B cell (primary cell): ENCODE measurements at regions of chr14 and their contacts with region 1.

Region 1: GRCh38 chr14:67285876-67286452 is 44.7 kb downstream of the PALS1 start:
- DNase-seq: peak; percentile 56
- ATAC-seq: no peak
- H3K4me3 ChIP-seq: no peak overlapping the region
- H3K4me3 Mint-ChIP-seq: no peak overlapping the region
- H3K27ac ChIP-seq: no peak overlapping the region
- H3K27ac Mint-ChIP-seq: no peak overlapping the region
- H3K4me1 ChIP-seq: no peaks in the 10 kb centered on the region
- H3K4me1 Mint-ChIP-seq: no peaks in the 10 kb centered on the region
- H3K27me3 ChIP-seq: no peaks in the 10 kb centered on the region
- H3K27me3 Mint-ChIP-seq: no peaks in the 10 kb centered on the region
- CTCF ChIP-seq: peak; percentile 85

Region 2: DNA sequence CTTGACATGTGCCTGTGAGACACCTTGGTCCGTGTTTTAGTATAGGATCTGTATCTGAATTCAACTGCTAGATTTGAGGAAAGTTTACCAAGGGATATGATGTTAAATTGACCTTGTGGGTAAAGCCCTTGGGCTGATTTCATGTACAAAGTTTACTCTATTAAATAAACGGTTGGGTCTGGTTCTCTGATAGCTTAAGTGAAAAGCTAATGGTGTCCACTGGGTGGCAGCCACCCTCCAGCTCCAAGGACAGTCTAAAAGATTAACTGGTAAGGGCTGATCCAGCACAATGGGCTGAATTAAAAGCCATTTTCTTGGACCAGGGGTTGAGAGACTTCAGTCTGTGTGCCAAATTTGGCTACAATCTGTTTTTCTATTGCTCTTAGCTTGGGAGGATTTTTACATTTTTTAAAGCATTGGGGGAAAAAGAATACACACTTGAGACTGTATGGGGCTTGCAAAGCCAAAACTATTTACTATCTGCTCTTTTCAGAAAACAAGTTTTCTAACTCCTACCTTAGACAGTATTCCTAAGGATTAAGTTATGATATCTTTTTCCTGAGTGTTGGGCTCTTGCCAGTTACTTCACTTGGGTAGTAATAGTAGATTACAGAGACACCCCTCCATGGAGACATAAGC is 661.5 kb before region 1 on chr14:
- CTCF ChIA-PET with region 1: interaction called, 24 read pairs
- POLR2A ChIA-PET with region 1: no interaction called
- intact Hi-C with region 1: loop called (anchors 2 kb)
- DNase-seq: peak; percentile 35
- ATAC-seq: no peak
- H3K4me3 ChIP-seq: no peak overlapping the region
- H3K4me3 Mint-ChIP-seq: no peak overlapping the region
- H3K27ac ChIP-seq: no peak overlapping the region
- H3K27ac Mint-ChIP-seq: no peak overlapping the region
- H3K4me1 ChIP-seq: no peaks in the 10 kb centered on the region
- H3K4me1 Mint-ChIP-seq: no peaks in the 10 kb centered on the region
- H3K27me3 ChIP-seq: no peaks in the 10 kb centered on the region
- H3K27me3 Mint-ChIP-seq: no peaks in the 10 kb centered on the region
- CTCF ChIP-seq: peak; percentile 68

Region 3: GRCh38 chr14:67166450-67166853 is 119.5 kb before region 1 on chr14:
- CTCF ChIA-PET with region 1: interaction called, 58 read pairs
- POLR2A ChIA-PET with region 1: no interaction called
- intact Hi-C with region 1: loop called (anchors 1 kb)
- DNase-seq: peak; percentile 43
- ATAC-seq: no peak
- H3K4me3 ChIP-seq: no peak overlapping the region
- H3K4me3 Mint-ChIP-seq: no peak overlapping the region
- H3K27ac ChIP-seq: no peak overlapping the region
- H3K27ac Mint-ChIP-seq: no peak overlapping the region
- H3K4me1 ChIP-seq: no peaks in the 10 kb centered on the region
- H3K4me1 Mint-ChIP-seq: no peaks in the 10 kb centered on the region
- H3K27me3 ChIP-seq: no peaks in the 10 kb centered on the region
- H3K27me3 Mint-ChIP-seq: no peaks in the 10 kb centered on the region
- CTCF ChIP-seq: peak; percentile 75

Region 4: GRCh38 chr14:67373347-67373746 is 87.4 kb after region 1 on chr14:
- CTCF ChIA-PET with region 1: no interaction called
- POLR2A ChIA-PET with region 1: no interaction called
- intact Hi-C with region 1: no loop called
- DNase-seq: no peak
- ATAC-seq: no peak
- H3K4me3 ChIP-seq: no peak overlapping the region
- H3K4me3 Mint-ChIP-seq: no peak overlapping the region
- H3K27ac ChIP-seq: no peak overlapping the region
- H3K27ac Mint-ChIP-seq: no peak overlapping the region
- H3K4me1 ChIP-seq: no peaks in the 10 kb centered on the region
- H3K4me1 Mint-ChIP-seq: peaks cover 7% of the 10 kb centered on the region
- H3K27me3 ChIP-seq: no peaks in the 10 kb centered on the region
- H3K27me3 Mint-ChIP-seq: no peaks in the 10 kb centered on the region
- CTCF ChIP-seq: no peak